ENCODE measurements at regions of chr5 and their contacts with region 1.

Region 1: DNA sequence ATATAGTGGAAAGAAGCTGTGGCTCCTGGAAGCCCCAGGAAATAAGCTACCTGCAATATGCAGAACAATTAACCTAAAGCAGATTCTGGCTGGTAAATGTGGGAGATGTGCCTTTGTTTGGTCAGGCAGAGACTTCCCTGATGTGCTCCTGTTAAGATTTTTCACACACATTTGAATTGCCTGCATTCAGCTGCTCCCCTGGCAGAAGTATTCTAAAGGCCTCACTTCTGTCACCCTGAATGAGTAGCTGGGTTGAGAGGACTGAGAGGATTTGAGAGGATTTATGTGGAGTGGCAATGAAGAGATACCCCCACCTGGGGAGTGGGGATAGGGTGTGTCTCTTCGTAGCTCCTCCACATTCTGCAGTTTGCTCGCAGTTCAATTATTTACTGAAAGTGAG is 130.5 kb downstream of the ST8SIA4 start:
- DNase-seq: no peak
- ATAC-seq: no peak; the same call in 2 of the 3 replicates
- H3K4me3 ChIP-seq: no peak overlapping the region
- H3K27ac ChIP-seq: no peak overlapping the region
- H3K4me1 ChIP-seq: peaks cover 10% of the 10 kb centered on the region
- H3K27me3 ChIP-seq: no peaks in the 10 kb centered on the region
- CTCF ChIP-seq: no peak
- EP300 ChIP-seq: no peak
- POLR2A ChIP-seq: no peak
- RAD21 ChIP-seq: no peak

Region 2: DNA sequence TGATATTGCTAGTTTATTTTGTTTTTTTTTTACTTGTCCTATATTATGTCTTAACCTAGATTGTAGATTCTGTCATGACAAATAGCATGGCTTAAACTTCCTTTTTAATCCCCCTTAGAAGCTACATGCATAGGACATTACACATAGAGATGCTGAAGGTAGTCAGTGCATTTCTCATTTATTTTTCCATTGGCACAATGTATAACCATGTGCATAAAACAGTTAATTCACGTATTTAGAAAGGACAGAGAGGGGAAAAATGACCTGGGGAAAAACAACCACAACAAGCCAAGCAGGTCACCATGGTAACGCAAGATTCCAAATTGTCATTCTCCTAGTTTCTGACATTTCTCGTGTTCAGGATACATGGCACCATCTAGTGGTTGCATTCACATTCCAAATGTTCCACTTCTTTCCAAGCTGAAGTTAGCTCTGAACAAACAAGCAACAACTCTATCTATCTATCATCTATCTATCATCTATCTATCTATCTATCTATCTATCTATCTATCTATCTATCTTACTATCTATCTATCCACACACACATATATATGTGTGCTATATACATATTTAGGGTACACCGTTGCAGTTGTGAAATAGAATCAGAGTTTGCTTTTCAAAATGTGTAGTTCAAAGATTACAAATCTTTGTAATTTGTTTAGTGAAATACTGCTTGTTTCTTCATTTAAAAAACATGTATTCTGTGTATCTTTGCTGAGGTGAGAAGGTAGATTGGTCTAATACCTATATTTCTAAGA is 617.8 kb after region 1 on chr5:
- CTCF ChIA-PET with region 1: interaction called, 3 read pairs
- POLR2A ChIA-PET with region 1: no interaction called
- RAD21 ChIA-PET with region 1: interaction called, 4 read pairs
- SMC1A ChIA-PET with region 1: interaction called, 6 read pairs
- in situ Hi-C with region 1: no loop called
- intact Hi-C with region 1: loop called (anchors 5 kb)
- DNase-seq: peak; percentile 12
- ATAC-seq: peak; percentile 57
- H3K4me3 ChIP-seq: no peak overlapping the region
- H3K27ac ChIP-seq: no peak overlapping the region
- H3K4me1 ChIP-seq: no peaks in the 10 kb centered on the region
- H3K27me3 ChIP-seq: no peaks in the 10 kb centered on the region
- CTCF ChIP-seq: peak; percentile 42 to 67 (median 58); a peak in 5 of 6 replicates
- EP300 ChIP-seq: no peak
- POLR2A ChIP-seq: no peak
- RAD21 ChIP-seq: peak; percentile 68

Measured in GM12878 (cell line).